HEK293T (cell line): ENCODE measurements at regions of chr1 and their contacts with region 1.

Region 1: DNA sequence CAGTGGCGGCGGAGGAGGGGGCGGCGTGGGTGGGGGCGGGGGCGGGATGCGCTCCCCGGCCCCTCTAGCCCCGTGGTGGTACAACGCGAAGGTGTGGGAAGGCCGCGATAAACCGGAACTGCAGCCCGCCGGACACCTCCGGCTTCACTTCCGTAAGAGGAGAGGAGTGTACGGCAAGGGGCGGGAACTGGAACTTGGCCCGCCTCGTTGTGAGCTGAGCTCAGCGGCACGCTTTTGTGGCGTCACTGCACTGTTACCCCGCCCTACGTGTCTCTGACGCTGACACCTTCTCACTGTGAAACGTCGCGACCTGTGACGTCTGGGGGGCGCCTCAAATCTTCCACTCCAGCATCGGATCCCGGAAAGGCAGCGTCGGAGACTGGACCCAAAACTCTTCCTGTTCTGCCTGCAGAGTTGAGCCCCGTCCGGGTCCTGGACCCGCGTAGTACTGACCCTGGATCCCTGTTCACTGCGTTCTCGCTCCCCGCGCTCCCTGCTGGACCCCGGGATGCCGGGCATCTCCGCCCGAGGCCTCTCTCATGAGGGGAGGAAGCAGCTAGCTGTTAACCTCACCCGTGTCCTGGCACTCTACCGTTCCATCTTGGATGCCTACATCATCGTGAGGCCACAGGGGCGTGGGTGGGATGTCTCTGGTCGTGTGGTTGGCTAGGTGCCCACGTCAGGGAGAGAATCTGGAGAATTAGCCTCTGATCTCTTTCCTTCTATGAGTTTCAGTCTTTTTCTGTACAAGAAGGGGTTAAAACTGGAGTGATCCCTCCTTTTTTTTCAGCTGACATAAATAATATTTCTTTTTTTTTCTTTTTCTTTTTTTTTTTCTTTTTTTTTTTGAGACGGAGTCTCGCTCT is at the start of gene ISG20L2:
- DNase-seq: peak; percentile 94

Region 2: GRCh38 chr1:156096640-156097391 is 632.0 kb before region 1 on chr1:
- CTCF ChIA-PET with region 1: no interaction called
- POLR2A ChIA-PET with region 1: no interaction called
- DNase-seq: peak; percentile 92

Region 3: GRCh38 chr1:156584813-156585212 is 144.0 kb before region 1 on chr1:
- CTCF ChIA-PET with region 1: no interaction called
- POLR2A ChIA-PET with region 1: no interaction called
- DNase-seq: peak; percentile 45

Region 4: DNA sequence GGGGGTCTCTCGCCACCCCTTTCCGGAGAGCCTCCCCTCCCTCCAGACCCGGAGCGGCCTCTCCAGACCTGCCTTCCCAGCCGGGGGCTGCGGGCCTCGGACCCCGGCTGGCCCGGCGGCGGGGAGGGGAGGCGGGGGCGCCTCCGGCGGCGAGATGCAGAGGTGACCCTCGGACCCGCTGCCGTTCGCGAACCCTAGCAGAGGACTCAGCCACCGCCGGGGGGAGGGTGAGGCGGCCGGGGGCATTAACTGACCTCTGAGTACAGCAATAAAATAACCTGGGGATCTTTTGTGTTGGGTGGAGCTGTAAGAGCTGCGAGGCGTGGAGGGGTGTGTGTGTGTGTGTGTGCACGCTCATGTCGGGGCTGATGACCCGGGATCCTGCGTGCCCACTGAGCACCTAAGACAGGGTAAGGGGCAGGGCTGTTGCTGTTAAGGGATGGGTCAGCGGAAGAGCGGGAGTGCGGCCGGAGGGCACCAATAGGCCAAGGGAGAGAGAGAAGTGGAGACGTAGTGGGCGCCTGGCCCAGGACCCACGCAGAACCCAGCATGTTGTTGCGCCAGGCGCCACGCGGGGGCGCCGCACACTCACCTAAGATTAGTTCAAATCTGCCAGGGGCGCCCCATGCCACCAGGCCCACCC is 103.3 kb before region 1 on chr1:
- CTCF ChIA-PET with region 1: interaction called, 12 read pairs
- POLR2A ChIA-PET with region 1: interaction called, 8 read pairs
- DNase-seq: peak; percentile 73

Region 5: GRCh38 chr1:156648951-156649350 is 79.9 kb before region 1 on chr1:
- CTCF ChIA-PET with region 1: no interaction called
- POLR2A ChIA-PET with region 1: no interaction called
- DNase-seq: no peak

Region 6: GRCh38 chr1:156689035-156689952 is 39.5 kb before region 1 on chr1:
- CTCF ChIA-PET with region 1: interaction called, 335 read pairs
- POLR2A ChIA-PET with region 1: interaction called, 137 read pairs
- DNase-seq: peak; percentile 92

Region 7: DNA sequence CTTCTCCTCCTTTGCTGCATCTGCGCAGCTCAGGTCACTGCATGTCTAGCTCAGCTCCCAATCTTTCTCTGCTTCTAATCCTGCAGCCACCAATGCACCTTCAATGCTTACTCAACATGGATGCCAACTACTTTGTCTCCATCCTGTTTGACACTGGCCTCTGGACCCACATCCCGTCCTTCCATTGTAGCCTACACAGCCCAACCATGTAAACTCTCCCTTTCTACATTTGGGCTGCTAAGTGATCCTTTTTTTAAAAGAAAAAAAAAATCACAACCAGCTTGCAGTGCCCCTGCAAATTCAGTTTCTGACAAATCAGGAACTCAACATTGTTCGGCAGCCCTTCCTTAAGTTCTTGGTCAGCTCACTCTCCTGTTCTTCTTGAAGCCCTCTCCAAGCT is 14.0 kb before region 1 on chr1:
- CTCF ChIA-PET with region 1: interaction called, 30 read pairs
- POLR2A ChIA-PET with region 1: interaction called, 18 read pairs
- DNase-seq: no peak

Region 8: GRCh38 chr1:156751758-156752757 is 23.2 kb after region 1 on chr1:
- CTCF ChIA-PET with region 1: interaction called, 18 read pairs
- POLR2A ChIA-PET with region 1: interaction called, 33 read pairs
- DNase-seq: peak; percentile 93

Region 9: DNA sequence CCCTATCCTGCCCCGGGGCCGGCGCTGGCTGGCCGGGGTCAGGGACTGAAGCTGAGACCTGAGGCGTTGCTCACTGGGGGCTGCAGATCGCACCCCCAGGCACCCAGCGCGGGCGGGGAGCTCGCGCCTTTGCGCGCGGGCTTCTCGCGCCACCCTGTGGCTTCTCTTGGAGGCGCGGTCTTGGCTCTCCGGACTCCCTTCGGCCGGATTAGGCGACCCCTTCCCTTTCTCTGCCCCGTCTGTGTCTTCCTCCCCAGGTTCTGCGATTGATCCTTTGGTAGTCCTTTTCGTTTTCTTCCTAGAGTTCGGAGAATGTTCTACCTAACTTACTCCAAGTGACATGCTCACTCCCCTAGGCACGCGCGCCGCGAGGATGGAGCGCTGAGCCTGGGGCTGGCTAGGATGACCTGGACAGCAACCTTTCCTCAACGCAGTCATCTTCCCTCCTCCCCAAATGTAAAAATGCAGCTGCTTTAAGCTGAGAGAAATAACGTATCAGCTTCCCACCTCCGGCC is 131.3 kb after region 1 on chr1:
- CTCF ChIA-PET with region 1: interaction called, 61 read pairs
- POLR2A ChIA-PET with region 1: interaction called, 23 read pairs
- DNase-seq: peak; percentile 86